AG04449 (cell line): ENCODE measurements at regions of chr3 and their contacts with region 1.

Region 1: GRCh38 chr3:69691860-69692259 is 47.4 kb upstream of the MITF start:
- DNase-seq: no peak
- H3K4me3 ChIP-seq: no peak overlapping the region
- CTCF ChIP-seq: no peak

Region 2: DNA sequence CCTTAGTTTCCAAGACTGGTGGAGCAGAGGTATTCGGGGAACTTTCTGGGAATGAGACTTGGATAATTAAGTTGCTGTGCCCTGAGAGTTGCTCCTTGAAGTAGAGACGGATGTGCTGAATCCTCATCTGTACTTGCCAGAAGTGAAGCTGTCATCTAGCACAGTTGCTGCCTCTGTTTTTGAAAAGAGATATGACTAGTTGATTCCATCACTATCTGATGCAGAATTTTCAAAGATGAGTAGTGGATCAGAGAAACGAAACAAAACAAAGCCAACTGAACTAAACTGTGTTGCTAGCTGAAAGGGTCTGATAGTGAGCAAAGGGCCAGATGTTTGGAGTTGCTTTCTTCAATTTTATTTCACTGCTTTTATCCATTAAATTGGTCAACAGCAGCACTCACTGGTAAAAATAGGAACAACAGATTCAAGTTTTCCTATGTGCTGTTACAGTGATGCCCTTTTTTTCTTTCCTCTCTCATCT is 100.1 kb after region 1 on chr3:
- CTCF ChIA-PET with region 1: interaction called, 140 read pairs
- POLR2A ChIA-PET with region 1: no interaction called
- DNase-seq: no peak
- H3K4me3 ChIP-seq: no peak overlapping the region
- CTCF ChIP-seq: peak; percentile 32

Region 3: GRCh38 chr3:69855436-69856162 is 163.7 kb after region 1 on chr3:
- CTCF ChIA-PET with region 1: interaction called, 54 read pairs
- POLR2A ChIA-PET with region 1: no interaction called
- DNase-seq: no peak
- H3K4me3 ChIP-seq: no peak overlapping the region
- CTCF ChIP-seq: peak; percentile 39

Region 4: DNA sequence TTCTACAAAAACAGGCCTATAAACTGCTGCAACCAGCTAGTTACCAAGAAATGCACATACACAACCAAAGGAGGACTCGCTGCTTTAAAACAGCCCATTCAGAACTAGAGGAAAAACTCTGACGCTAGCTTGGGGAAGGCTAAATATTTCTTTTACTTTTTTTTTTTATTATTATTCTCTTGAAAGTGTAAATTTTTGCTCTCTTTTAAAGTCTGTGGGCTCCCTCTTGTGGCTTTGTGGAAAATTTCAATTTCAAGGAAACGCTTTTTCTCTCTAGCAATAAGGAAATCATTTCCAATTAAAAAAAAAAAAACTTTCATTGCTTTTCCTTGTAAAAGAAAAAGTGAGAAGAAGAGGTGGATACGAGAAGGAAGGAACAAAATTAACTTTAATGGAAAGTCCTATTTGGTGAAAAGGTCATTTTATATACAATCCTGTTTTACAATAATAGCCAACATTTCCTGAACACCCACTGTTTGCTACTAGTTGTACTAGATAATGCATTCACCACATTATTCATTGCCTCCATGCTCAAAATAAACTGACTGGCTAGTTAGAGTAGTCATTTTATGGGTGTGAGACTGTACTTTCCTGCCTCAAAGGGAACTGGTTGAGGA is 256.5 kb after region 1 on chr3:
- CTCF ChIA-PET with region 1: interaction called, 18 read pairs
- POLR2A ChIA-PET with region 1: no interaction called
- DNase-seq: no peak
- H3K4me3 ChIP-seq: no peak overlapping the region
- CTCF ChIP-seq: peak; percentile 22